CD8-positive, alpha-beta T cell (primary cell): ENCODE measurements at regions of chr5 and their contacts with region 1.

Region 1: GRCh38 chr5:100623719-100624118 is 88.5 kb downstream of the FAM174A start:
- DNase-seq: peak in 2 of 9 experiments; percentile 39 to 58
- ATAC-seq: peak; percentile 62
- H3K4me3 ChIP-seq: no peak overlapping the region
- H3K4me3 Mint-ChIP-seq: no peak overlapping the region
- H3K27ac ChIP-seq: no peak overlapping the region
- H3K27ac Mint-ChIP-seq: no peak overlapping the region
- H3K4me1 ChIP-seq: no peaks in the 10 kb centered on the region
- H3K4me1 Mint-ChIP-seq: no peaks in the 10 kb centered on the region
- H3K27me3 ChIP-seq: no peaks in the 10 kb centered on the region
- H3K27me3 Mint-ChIP-seq: peaks cover 2% of the 10 kb centered on the region
- CTCF ChIP-seq: peak; percentile 56

Region 2: DNA sequence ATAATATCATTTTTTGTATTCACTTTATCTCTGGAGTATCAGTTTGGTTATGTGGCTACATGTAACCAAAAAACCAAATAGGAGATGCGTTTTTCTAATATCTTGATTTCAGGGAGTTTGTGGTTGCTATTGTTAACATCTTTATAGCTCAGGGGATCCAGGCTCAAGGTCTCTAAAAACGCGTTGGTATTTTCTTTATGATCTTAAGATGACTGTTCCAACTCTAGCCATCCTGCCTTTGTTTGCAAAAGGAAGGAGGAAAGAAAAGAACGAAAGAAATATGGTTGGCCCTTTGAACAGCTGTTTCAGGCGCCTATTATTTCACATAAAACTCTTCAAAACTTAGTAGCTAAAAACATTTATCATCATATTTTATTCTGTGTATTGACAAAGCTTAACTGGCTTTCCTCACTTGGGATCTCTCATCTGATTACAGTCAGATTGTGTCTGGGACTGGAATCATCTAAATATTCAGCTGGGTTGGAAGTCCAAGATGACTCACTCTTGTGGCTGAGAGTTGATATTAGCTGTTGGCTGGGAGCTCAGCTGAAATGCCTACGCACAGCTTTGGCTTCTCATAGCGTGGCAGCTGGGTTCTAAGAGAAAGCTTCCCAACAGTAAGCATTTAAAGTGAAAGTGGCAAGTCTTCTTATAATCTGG is 28.4 kb before region 1 on chr5:
- CTCF ChIA-PET with region 1: no interaction called
- POLR2A ChIA-PET with region 1: no interaction called
- intact Hi-C with region 1: no loop called
- DNase-seq: no peak
- ATAC-seq: no peak
- H3K4me3 ChIP-seq: no peak overlapping the region
- H3K4me3 Mint-ChIP-seq: no peak overlapping the region
- H3K27ac ChIP-seq: no peak overlapping the region
- H3K27ac Mint-ChIP-seq: no peak overlapping the region
- H3K4me1 ChIP-seq: no peaks in the 10 kb centered on the region
- H3K4me1 Mint-ChIP-seq: no peaks in the 10 kb centered on the region
- H3K27me3 ChIP-seq: no peaks in the 10 kb centered on the region
- H3K27me3 Mint-ChIP-seq: no peaks in the 10 kb centered on the region
- CTCF ChIP-seq: no peak

Region 3: GRCh38 chr5:101009758-101010519 is 386.2 kb after region 1 on chr5:
- CTCF ChIA-PET with region 1: interaction called, 6 read pairs
- POLR2A ChIA-PET with region 1: no interaction called
- intact Hi-C with region 1: loop called in 1 of 2 experiments (anchors 10 kb)
- DNase-seq: no peak
- ATAC-seq: no peak
- H3K4me3 ChIP-seq: no peak overlapping the region
- H3K4me3 Mint-ChIP-seq: no peak overlapping the region
- H3K27ac ChIP-seq: no peak overlapping the region
- H3K27ac Mint-ChIP-seq: no peak overlapping the region
- H3K4me1 ChIP-seq: no peaks in the 10 kb centered on the region
- H3K4me1 Mint-ChIP-seq: no peaks in the 10 kb centered on the region
- H3K27me3 ChIP-seq: no peaks in the 10 kb centered on the region
- H3K27me3 Mint-ChIP-seq: no peaks in the 10 kb centered on the region
- CTCF ChIP-seq: no peak

Region 4: GRCh38 chr5:101045689-101046088 is 422.0 kb after region 1 on chr5:
- CTCF ChIA-PET with region 1: interaction called, 4 read pairs
- POLR2A ChIA-PET with region 1: no interaction called
- intact Hi-C with region 1: loop called (anchors 1 to 2 kb)
- DNase-seq: peak in 2 of 9 experiments; percentile 34 to 45
- ATAC-seq: no peak
- H3K4me3 ChIP-seq: no peak overlapping the region
- H3K4me3 Mint-ChIP-seq: no peak overlapping the region
- H3K27ac ChIP-seq: no peak overlapping the region
- H3K27ac Mint-ChIP-seq: no peak overlapping the region
- H3K4me1 ChIP-seq: peaks cover 7% of the 10 kb centered on the region
- H3K4me1 Mint-ChIP-seq: peaks cover 4% of the 10 kb centered on the region
- H3K27me3 ChIP-seq: no peaks in the 10 kb centered on the region
- H3K27me3 Mint-ChIP-seq: no peaks in the 10 kb centered on the region
- CTCF ChIP-seq: peak; percentile 39

Region 5: GRCh38 chr5:101390151-101390908 is 766.6 kb after region 1 on chr5:
- CTCF ChIA-PET with region 1: no interaction called
- POLR2A ChIA-PET with region 1: no interaction called
- intact Hi-C with region 1: loop called (anchors 2 to 5 kb)
- DNase-seq: peak in 2 of 9 experiments; percentile 22 to 33
- ATAC-seq: no peak
- H3K4me3 ChIP-seq: no peak overlapping the region
- H3K4me3 Mint-ChIP-seq: no peak overlapping the region
- H3K27ac ChIP-seq: no peak overlapping the region
- H3K27ac Mint-ChIP-seq: no peak overlapping the region
- H3K4me1 ChIP-seq: no peaks in the 10 kb centered on the region
- H3K4me1 Mint-ChIP-seq: no peaks in the 10 kb centered on the region
- H3K27me3 ChIP-seq: no peaks in the 10 kb centered on the region
- H3K27me3 Mint-ChIP-seq: no peaks in the 10 kb centered on the region
- CTCF ChIP-seq: peak; percentile 36

Region 6: GRCh38 chr5:101678481-101679193 is 1054.9 kb after region 1 on chr5:
- CTCF ChIA-PET with region 1: no interaction called
- POLR2A ChIA-PET with region 1: no interaction called
- intact Hi-C with region 1: loop called in 1 of 2 experiments (anchors 5 kb)
- DNase-seq: peak in 5 of 9 experiments; percentile 1 to 29 (median 16)
- ATAC-seq: no peak
- H3K4me3 ChIP-seq: no peak overlapping the region
- H3K4me3 Mint-ChIP-seq: no peak overlapping the region
- H3K27ac ChIP-seq: no peak overlapping the region
- H3K27ac Mint-ChIP-seq: no peak overlapping the region
- H3K4me1 ChIP-seq: no peaks in the 10 kb centered on the region
- H3K4me1 Mint-ChIP-seq: no peaks in the 10 kb centered on the region
- H3K27me3 ChIP-seq: no peaks in the 10 kb centered on the region
- H3K27me3 Mint-ChIP-seq: no peaks in the 10 kb centered on the region
- CTCF ChIP-seq: peak; percentile 69

Region 7: DNA sequence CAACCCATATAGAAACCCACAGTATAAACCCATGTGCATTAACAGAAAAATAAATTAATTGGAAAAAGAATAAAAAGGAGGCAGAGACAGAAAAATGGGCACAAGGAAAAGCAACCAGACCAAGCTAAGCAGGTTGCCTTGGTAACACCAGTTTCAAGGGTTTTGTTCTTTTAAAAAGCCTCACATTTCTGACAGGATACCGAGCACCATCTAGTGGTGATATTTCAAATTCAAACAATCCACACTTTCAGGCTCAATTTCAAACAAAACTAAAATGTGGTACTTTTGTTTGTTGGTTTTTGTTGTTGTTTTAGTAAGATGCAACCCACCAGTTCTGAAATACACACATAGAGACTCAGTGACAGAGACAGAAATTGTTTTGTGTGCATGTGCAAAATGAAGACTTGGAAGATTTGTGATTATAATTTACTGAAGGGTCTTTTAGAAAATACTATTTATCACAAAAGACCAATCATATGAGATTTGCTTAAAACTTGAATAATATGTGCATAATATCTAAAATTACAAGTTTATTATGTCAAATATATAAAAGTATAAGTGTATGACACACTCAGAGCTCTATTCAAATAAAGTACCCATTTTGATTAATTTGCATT is 1354.1 kb after region 1 on chr5:
- CTCF ChIA-PET with region 1: no interaction called
- POLR2A ChIA-PET with region 1: no interaction called
- intact Hi-C with region 1: loop called in 1 of 2 experiments (anchors 5 kb)
- DNase-seq: peak in 2 of 9 experiments; percentile 7 to 26
- ATAC-seq: no peak
- H3K4me3 ChIP-seq: no peak overlapping the region
- H3K4me3 Mint-ChIP-seq: no peak overlapping the region
- H3K27ac ChIP-seq: no peak overlapping the region
- H3K27ac Mint-ChIP-seq: no peak overlapping the region
- H3K4me1 ChIP-seq: no peaks in the 10 kb centered on the region
- H3K4me1 Mint-ChIP-seq: no peaks in the 10 kb centered on the region
- H3K27me3 ChIP-seq: no peaks in the 10 kb centered on the region
- H3K27me3 Mint-ChIP-seq: peaks cover 3% of the 10 kb centered on the region
- CTCF ChIP-seq: peak; percentile 44

Region 8: GRCh38 chr5:102223542-102224477 is 1600.1 kb after region 1 on chr5:
- CTCF ChIA-PET with region 1: no interaction called
- POLR2A ChIA-PET with region 1: no interaction called
- intact Hi-C with region 1: loop called in 1 of 2 experiments (anchors 5 kb)
- DNase-seq: peak in 2 of 9 experiments; percentile 48 to 57
- ATAC-seq: no peak
- H3K4me3 ChIP-seq: no peak overlapping the region
- H3K4me3 Mint-ChIP-seq: no peak overlapping the region
- H3K27ac ChIP-seq: no peak overlapping the region
- H3K27ac Mint-ChIP-seq: no peak overlapping the region
- H3K4me1 ChIP-seq: no peaks in the 10 kb centered on the region
- H3K4me1 Mint-ChIP-seq: no peaks in the 10 kb centered on the region
- H3K27me3 ChIP-seq: no peaks in the 10 kb centered on the region
- H3K27me3 Mint-ChIP-seq: peaks cover 2% of the 10 kb centered on the region
- CTCF ChIP-seq: peak; percentile 86